ENCODE measurements at regions of chr13 and their contacts with region 1.

Region 1: DNA sequence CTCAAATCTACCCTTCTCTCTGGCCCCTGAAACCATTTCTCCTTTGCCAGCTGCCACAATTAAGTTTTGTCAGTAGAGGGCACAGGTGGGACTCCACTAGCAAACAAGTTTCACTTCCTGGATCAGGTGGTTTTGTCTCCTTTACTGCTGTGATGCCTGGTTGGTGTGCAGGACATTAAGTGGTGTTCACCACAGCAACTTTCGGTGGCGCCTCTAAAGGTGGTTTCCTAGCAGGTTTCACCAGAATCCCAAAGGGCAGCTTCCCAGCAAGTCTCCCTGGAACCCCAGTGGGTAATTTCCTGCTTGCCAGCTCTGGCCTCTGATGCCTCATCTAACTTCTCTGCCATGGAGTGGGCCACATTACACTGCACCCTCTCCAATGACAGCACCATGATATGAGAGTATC is 16.6 kb downstream of the MED4 start:
- DNase-seq: peak in 5 of 9 donors; percentile 3 to 34 (median 6)
- ATAC-seq: peak; percentile 73
- H3K4me3 ChIP-seq: no peak overlapping the region
- H3K4me3 Mint-ChIP-seq: no peak overlapping the region
- H3K27ac ChIP-seq: no peak overlapping the region
- H3K27ac Mint-ChIP-seq: peak overlapping the region in 3 of 9 donors; percentile 20 to 60 (median 28)
- H3K4me1 ChIP-seq: no peaks in the 10 kb centered on the region
- H3K4me1 Mint-ChIP-seq: peaks cover 0 to 11% (median 0%) of the 10 kb centered on the region in 7 donors
- H3K27me3 ChIP-seq: no peaks in the 10 kb centered on the region
- H3K27me3 Mint-ChIP-seq: no peaks in the 10 kb centered on the region

Region 2: DNA sequence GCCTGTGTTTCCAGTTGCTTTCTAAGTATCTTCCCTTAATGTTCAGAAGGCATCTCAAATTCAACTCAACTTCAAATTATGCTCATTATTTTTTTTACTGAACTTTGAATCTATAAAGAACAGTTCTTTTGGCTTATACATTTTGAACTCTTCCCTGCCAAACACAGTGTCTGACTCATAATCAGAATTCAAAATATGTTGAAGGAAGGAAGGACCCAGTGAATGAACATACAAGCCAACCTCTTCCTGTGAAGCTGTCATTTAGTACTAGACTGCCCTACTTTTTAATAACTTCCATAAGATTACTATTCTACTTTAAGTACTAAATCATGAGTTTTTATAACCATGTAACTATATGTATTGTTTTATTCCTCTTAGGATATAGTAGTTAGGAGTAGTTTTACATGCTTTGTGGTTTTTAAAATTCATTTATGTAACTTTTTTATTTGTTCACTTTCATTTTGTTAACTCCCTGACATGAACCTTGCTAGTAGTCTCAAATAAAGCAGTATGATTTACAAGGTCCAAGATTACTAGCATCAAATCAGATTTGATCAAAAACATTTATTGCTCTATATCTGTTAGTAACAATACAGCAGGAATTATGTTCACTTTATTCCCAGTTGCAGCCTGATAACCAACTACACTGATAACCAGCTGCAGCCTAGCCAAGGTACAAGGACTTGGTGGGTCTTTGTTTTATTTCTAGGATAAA is 34.3 kb before region 1 on chr13:
- CTCF ChIA-PET with region 1: no interaction called
- POLR2A ChIA-PET with region 1: no interaction called
- intact Hi-C with region 1: loop called (anchors 5 kb)
- DNase-seq: no peak
- ATAC-seq: no peak
- H3K4me3 ChIP-seq: no peak overlapping the region
- H3K4me3 Mint-ChIP-seq: peak overlapping the region in 1 of 10 donors; percentile 63
- H3K27ac ChIP-seq: no peak overlapping the region
- H3K27ac Mint-ChIP-seq: peak overlapping the region in 8 of 9 donors; percentile 37 to 85 (median 79)
- H3K4me1 ChIP-seq: peaks cover 1 to 3% of the 10 kb centered on the region in 2 donors
- H3K4me1 Mint-ChIP-seq: peaks cover 5 to 43% (median 12%) of the 10 kb centered on the region in 7 donors
- H3K27me3 ChIP-seq: no peaks in the 10 kb centered on the region
- H3K27me3 Mint-ChIP-seq: no peaks in the 10 kb centered on the region